ENCODE measurements at regions of chr5 and their contacts with region 1.

Region 1: DNA sequence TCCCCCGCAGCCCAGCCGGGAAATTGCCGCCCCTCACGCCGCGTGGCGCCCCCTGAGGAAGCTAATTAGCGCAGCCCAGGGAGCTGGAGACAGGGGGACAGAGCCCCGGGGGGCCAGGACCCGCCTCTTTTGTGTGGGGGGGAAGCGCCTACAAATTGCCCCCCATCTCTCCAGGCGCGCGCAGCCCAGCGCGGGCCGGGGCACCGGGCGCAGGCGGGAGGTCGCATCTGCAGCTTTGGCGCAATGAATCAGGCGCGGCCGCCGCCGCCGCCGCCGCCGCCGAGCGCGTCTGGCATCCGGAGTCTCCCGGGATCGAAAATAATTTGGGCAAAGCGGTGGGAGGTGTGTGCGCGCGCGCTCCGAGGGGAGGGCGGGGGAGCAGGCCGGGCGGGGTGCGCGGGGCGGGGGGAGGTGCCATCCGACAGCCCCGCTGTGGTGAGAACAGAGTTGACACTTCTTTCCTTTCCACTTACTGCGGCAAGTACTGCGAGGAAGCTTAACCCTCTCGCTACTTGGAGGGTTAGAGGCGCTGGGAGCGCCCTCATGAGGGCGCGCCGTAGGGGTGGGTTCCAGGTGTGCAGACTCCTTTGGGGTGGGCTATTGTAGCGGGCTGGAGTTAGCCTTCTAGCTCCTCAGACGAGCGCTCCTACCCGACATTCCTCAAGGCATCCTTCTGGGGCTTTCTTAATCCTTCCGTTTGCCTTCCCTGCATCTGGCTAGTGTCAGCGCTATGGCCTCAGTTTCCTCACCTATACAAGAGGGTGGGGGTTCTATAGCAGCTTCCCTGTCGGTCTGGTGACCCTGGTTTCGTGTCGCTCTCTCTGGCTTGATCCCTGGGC is 63.1 kb downstream of the CXXC5 start:
- DNase-seq: no peak
- ATAC-seq: peak; percentile 45
- H3K4me3 Mint-ChIP-seq: peak overlapping the region; percentile 82
- H3K27ac Mint-ChIP-seq: peak overlapping the region; percentile 46
- H3K4me1 Mint-ChIP-seq: peaks cover 30% of the 10 kb centered on the region
- H3K27me3 Mint-ChIP-seq: no peaks in the 10 kb centered on the region
- CTCF ChIP-seq: no peak

Region 2: GRCh38 chr5:139458580-139459406 is 252.5 kb before region 1 on chr5:
- CTCF ChIA-PET with region 1: no interaction called
- POLR2A ChIA-PET with region 1: no interaction called
- intact Hi-C with region 1: no loop called
- DNase-seq: no peak
- ATAC-seq: peak; percentile 61
- H3K4me3 Mint-ChIP-seq: no peak overlapping the region
- H3K27ac Mint-ChIP-seq: no peak overlapping the region
- H3K4me1 Mint-ChIP-seq: peaks cover 14% of the 10 kb centered on the region
- H3K27me3 Mint-ChIP-seq: no peaks in the 10 kb centered on the region
- CTCF ChIP-seq: no peak

Region 3: DNA sequence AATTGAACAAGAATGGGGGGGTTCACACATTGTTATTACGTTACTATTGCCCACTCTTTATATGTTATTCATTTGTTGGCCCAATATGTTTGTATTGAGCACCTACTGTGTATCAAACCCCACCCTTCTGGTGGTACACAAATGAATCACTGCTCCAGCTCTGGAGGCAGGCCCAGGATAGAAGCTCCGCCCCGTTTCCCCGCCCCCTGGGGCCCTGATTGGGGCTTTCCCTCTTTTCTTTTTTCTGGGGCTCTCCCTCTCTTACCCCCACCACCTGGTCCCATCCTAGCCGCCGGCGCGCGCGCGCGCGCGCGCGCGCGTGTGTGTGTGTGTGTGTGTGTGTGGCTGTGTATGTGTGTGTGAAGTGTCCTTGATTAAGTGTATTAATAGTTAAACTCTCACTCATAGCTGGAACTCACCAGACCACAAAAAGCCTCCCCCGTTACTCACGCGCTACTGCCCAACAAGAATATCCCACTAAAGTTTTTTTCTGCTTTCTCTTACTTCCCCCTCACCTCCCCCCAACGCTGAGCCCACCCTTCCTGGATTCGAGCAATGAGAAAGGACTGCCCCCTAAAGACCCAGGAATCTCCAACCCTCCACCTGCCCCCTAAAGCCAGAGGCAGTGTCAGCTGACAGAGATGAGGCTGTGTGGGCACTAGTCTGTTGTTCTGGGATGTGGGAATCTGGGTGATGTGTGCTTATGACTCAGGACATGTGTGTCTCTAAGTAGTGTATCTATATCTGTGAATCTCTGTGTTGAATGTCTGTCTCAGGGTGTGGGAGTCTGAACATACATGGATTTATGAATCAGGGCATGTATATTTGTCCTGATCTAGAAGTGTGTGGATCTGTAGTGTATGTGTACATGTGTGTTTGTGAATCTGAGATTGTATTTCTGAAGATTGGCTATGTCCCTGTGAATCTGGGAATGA is 59.2 kb before region 1 on chr5:
- CTCF ChIA-PET with region 1: no interaction called
- POLR2A ChIA-PET with region 1: interaction called, 27 read pairs
- intact Hi-C with region 1: loop called (anchors 2 kb)
- DNase-seq: peak; percentile 91
- ATAC-seq: peak; percentile 56
- H3K4me3 Mint-ChIP-seq: peak overlapping the region; percentile 98
- H3K27ac Mint-ChIP-seq: peak overlapping the region; percentile 85
- H3K4me1 Mint-ChIP-seq: peaks cover 76% of the 10 kb centered on the region
- H3K27me3 Mint-ChIP-seq: no peaks in the 10 kb centered on the region
- CTCF ChIP-seq: no peak

Region 4: DNA sequence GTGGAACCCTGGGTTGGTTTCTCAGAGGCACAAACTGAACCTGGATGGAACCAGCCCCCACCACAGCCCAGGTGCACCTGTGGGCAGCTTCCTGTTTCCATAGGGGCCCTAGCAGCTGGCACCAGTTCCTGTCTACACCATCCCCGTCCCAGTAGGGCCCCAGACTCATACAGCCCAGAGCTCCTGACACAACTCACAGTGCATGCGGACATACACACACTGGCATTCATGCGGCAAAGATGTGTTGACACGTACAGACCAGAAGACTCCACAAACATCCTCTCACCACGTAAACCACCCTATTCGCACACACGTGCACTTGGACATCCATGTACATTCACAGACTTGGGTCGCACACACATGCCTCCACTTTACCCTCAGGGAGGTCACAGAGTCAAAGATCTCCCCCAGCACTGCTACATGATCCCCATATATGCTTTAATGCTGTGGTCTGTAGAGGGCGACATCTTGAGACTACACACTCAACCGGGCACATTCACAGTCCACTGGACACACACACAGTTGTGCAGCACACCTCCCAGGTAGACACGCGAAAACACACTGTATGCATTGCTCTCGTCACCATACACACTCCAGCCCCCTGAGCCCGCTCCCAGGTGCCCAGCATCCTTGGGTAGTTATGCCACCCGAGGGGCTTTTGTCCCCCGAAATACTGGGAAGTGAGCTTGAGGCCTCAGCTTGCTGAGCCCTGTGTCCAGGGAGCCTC is 40.8 kb before region 1 on chr5:
- CTCF ChIA-PET with region 1: no interaction called
- POLR2A ChIA-PET with region 1: interaction called, 28 read pairs
- intact Hi-C with region 1: loop called (anchors 1 kb)
- DNase-seq: peak; percentile 65
- ATAC-seq: peak; percentile 61
- H3K4me3 Mint-ChIP-seq: peak overlapping the region; percentile 86
- H3K27ac Mint-ChIP-seq: peak overlapping the region; percentile 92
- H3K4me1 Mint-ChIP-seq: peaks cover 92% of the 10 kb centered on the region
- H3K27me3 Mint-ChIP-seq: no peaks in the 10 kb centered on the region
- CTCF ChIP-seq: no peak

Region 5: DNA sequence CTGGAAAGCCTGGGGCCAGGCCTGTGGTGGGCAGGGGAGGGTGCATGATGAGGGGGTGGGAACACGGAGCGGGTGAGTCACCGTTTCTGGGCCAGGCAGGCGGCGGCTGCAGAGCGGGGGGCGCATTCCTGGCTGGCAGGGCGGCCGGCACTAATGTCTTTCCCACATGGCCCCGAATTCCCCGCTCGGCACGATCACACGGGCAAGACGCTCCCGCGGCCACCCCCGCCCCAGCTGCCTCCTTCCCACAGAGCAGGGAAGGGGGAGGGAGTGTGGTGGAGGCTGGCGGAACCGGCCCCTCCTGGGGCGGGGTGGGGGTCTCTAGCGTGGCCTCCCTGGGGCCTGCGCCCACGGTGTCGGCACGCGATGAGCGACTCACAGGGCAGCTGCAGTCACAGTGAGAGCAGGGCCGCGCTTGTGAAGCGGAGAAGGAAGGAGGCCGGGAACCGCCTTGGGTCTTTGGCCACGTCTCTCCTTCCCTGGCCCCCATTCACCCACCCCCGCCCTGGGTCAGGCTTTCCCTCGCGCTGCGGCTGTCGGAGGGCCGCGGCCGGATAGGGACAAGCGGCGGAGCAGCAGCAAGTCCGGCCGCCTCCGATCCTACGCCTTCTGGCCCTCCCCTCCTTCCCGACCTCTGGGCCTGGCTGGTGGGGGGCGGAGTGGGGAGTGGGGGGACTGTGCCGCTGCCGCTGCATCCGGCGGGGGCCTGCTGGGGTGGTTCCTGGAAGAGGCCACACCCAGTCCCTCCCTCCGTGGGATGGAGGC is 14.2 kb before region 1 on chr5:
- CTCF ChIA-PET with region 1: no interaction called
- POLR2A ChIA-PET with region 1: interaction called, 34 read pairs
- intact Hi-C with region 1: loop called (anchors 1 kb)
- DNase-seq: no peak
- ATAC-seq: peak; percentile 45
- H3K4me3 Mint-ChIP-seq: peak overlapping the region; percentile 78
- H3K27ac Mint-ChIP-seq: peak overlapping the region; percentile 61
- H3K4me1 Mint-ChIP-seq: peaks cover 53% of the 10 kb centered on the region
- H3K27me3 Mint-ChIP-seq: peaks cover 15% of the 10 kb centered on the region
- CTCF ChIP-seq: no peak

Region 6: DNA sequence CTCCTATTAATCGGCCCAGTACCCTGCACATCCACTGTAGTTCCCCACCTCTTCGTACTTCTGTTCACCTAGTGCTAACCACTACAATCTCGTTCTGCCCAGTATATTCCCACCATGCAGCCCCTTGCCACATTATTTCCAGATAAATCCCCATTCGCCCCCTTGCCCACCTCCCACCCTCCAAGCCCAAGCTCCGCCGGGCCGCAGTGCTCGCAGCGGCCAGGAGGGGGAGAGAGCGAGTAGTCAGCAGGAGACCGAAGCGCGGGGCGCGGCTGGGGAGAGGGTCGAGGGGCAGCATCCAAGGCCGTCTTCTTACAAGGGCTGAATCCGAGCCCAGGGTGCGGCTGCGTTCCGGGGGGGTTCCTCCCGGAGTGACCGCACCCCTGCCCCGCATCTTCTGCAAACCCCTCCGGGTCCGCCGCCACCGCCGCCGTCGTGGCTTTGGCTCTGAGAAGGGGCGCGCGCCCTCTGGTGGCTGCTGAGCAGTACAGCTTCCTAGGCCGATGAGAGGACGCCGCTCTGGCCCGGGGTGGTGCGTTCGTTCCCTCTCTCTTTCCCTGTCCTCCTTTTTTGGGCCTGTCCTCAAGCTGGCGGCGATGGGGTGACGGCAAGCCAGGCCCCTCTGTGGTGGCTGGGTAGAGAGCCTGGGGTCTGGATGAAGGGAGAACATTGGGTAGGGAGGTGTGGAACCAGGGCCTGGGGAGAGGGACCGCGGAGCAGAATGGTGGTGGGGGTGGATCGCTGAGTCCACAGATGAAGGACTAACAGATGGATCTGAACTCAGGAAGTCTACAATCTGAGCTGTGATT is 54.3 kb after region 1 on chr5:
- CTCF ChIA-PET with region 1: interaction called, 10 read pairs
- POLR2A ChIA-PET with region 1: interaction called, 6 read pairs
- intact Hi-C with region 1: loop called (anchors 1 kb)
- DNase-seq: peak; percentile 87
- ATAC-seq: peak; percentile 86
- H3K4me3 Mint-ChIP-seq: peak overlapping the region; percentile 74
- H3K27ac Mint-ChIP-seq: peak overlapping the region; percentile 56
- H3K4me1 Mint-ChIP-seq: peaks cover 25% of the 10 kb centered on the region
- H3K27me3 Mint-ChIP-seq: peaks cover 9% of the 10 kb centered on the region
- CTCF ChIP-seq: peak; percentile 98

Region 7: GRCh38 chr5:139903795-139904565 is 192.7 kb after region 1 on chr5:
- CTCF ChIA-PET with region 1: no interaction called
- POLR2A ChIA-PET with region 1: no interaction called
- intact Hi-C with region 1: no loop called
- DNase-seq: peak; percentile 18
- ATAC-seq: peak; percentile 57
- H3K4me3 Mint-ChIP-seq: peak overlapping the region; percentile 60
- H3K27ac Mint-ChIP-seq: no peak overlapping the region
- H3K4me1 Mint-ChIP-seq: peaks cover 6% of the 10 kb centered on the region
- H3K27me3 Mint-ChIP-seq: peaks cover 26% of the 10 kb centered on the region
- CTCF ChIP-seq: no peak

Region 8: DNA sequence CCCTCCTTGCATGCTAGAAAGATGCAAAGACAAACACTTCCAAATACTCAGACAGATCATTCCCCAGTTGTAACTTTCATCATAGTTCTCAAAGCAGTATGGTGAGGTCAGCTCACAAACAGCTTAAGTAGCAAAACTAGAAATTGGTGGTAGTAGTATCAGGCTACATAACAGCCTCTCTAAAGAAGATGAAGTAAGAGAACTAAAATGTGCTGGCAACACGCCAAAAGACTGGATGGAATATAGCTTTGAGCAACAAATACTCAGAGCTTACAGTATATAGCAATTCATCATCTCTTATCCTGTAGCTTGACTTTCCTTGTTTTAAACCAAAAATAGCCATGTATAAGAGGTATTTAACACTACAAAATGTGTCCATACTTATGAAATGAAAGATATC is 584.1 kb after region 1 on chr5:
- CTCF ChIA-PET with region 1: no interaction called
- POLR2A ChIA-PET with region 1: no interaction called
- intact Hi-C with region 1: no loop called
- DNase-seq: no peak
- ATAC-seq: no peak
- H3K4me3 Mint-ChIP-seq: no peak overlapping the region
- H3K27ac Mint-ChIP-seq: no peak overlapping the region
- H3K4me1 Mint-ChIP-seq: peaks cover 27% of the 10 kb centered on the region
- H3K27me3 Mint-ChIP-seq: no peaks in the 10 kb centered on the region
- CTCF ChIP-seq: no peak

Measured in activated B cell treated with CpG ODN at 0.5 μM for 24 hours (primary cell).